ENCODE measurements at regions of chr1 and their contacts with region 1.

Region 1: DNA sequence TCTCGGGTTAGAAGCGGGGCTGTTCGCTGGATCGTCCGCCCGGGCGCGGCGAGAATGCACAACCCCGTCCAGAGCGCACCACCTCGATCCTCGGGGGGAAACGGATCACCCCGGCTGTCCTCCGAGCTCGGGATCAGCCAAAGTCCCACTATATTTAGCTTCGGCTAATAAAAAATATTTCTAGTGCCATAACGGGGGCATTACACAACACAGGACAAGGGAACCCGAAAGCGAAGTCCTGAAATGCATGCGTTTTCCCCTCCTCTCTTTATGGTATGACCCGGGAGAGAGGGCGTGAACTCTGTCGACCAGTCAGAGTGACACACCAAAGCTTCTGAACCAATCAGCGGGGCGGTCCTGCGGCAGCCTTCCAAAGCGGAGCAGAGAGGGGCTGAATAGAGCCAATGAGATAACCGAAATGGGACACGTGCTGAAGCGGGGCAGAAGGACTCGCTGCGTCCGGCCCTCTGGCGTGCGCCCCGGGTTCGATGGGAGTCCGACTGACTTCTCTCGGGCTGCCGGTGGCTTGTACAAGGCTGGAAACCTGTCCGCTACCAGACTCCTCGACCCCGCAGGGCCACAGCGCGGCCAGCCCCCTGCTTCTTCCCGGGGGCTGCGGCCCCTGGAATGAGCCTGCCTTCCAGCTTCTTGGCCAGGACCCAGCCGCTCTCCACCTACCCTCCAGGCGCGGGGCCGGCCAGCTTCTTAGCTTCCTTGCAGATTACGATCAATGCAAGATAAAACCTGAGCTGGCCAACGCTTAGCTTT is at the start of gene ALDH4A1:
- DNase-seq: peak; percentile 99
- H3K4me3 Mint-ChIP-seq: peak within 1 kb of the TSS; percentile 88
- H3K27ac Mint-ChIP-seq: peak within 1 kb of the TSS; percentile 98
- H3K4me1 Mint-ChIP-seq: peaks cover 16% of the 10 kb centered on the region
- H3K27me3 Mint-ChIP-seq: no peaks in the 10 kb centered on the region
- CTCF ChIP-seq: peak; percentile 7
- total RNA-seq, gene ALDH4A1: 5.7 and 6.3 TPM in 2 replicates

Region 2: DNA sequence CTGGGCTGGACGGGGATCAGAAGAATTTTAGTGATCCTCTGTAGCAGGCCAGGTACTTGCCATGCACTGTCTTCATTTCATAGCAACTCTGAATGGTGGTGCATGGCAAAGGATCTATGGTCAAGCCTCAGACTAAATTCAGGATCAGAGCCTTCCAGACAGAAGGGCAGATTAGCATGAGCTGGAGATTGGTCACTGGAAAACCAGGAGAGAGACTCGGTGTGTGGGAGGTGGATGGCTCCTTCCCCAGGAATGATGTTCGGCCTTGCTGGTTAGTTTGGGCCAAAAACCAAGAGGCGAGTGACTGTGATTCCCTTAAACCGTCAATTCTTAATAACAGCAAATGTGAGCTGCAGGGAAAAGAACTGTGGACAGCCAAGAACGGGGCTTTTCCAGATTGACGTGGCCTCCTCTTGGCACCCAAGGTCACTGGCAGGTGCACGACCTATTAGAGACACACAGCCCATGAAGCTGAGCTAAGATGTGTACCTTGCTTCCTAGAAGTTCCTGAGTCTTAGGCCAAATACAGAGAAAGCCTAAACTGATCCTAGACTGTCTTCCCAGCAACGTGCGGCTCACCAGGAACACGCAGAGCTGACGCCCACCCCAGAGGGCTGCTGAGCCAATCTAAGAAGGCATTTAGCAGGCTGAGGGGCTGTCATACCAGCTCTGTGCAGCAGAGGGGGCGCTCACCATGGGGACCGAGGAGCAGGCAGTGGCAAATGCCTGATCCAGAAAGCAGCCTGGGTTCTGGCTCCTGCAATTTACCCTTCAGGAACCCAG is 18.9 kb before region 1 on chr1:
- CTCF ChIA-PET with region 1: interaction called, 16 read pairs
- POLR2A ChIA-PET with region 1: interaction called, 17 read pairs
- intact Hi-C with region 1: no loop called
- DNase-seq: peak; percentile 65
- H3K4me3 Mint-ChIP-seq: no peak overlapping the region
- H3K27ac Mint-ChIP-seq: no peak overlapping the region
- H3K4me1 Mint-ChIP-seq: peaks cover 5% of the 10 kb centered on the region
- H3K27me3 Mint-ChIP-seq: no peaks in the 10 kb centered on the region
- CTCF ChIP-seq: peak; percentile 86

Region 3: DNA sequence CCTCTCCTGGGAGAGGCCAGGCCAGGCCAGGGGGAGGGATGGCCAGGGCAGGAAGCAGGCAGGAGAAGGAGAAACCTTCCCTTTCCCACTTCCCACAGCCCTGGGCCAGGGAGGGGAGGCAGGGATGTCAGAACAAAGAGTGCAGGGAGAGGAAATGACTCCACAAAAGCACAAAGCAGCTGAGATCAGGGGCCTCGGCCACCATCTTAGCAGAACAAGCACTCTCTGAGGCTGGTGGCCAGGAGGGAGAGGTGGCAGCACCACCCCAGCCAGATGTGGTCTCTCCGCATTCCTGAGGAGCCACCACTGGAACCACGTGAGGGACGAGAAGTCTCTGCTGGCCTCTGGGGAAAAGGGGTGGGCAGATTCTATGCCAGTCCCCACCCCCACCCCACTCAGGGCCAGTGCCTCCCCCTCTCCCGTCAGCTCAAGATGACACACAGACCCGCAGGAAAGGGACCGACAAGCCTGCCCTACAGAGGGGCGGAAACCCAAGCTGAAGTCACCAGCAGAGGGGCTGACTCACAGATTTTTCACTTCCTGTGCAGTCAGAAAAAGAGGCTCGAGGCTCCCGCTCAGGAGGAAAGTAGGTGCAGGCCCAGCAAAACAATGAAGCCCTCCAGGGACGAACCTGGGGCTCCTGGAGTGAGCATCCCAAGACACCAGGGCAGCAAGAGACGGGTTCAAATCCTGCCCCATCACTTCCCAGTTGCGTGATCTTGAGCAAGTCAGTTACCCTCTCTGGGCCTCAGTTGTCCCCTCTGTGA is 23.8 kb after region 1 on chr1:
- CTCF ChIA-PET with region 1: interaction called, 11 read pairs
- POLR2A ChIA-PET with region 1: interaction called, 6 read pairs
- intact Hi-C with region 1: no loop called
- DNase-seq: peak; percentile 87
- H3K4me3 Mint-ChIP-seq: peak overlapping the region; percentile 44
- H3K27ac Mint-ChIP-seq: peak overlapping the region; percentile 75
- H3K4me1 Mint-ChIP-seq: peaks cover 27% of the 10 kb centered on the region
- H3K27me3 Mint-ChIP-seq: no peaks in the 10 kb centered on the region
- CTCF ChIP-seq: no peak

Region 4: GRCh38 chr1:18965206-18966173 is 62.8 kb after region 1 on chr1:
- CTCF ChIA-PET with region 1: interaction called, 5 read pairs
- POLR2A ChIA-PET with region 1: interaction called, 11 read pairs
- intact Hi-C with region 1: no loop called
- DNase-seq: peak; percentile 73
- H3K4me3 Mint-ChIP-seq: no peak overlapping the region
- H3K27ac Mint-ChIP-seq: no peak overlapping the region
- H3K4me1 Mint-ChIP-seq: peaks cover 32% of the 10 kb centered on the region
- H3K27me3 Mint-ChIP-seq: peaks cover 4% of the 10 kb centered on the region
- CTCF ChIP-seq: no peak

Region 5: GRCh38 chr1:19074902-19075721 is 172.4 kb after region 1 on chr1:
- CTCF ChIA-PET with region 1: interaction called, 24 read pairs
- POLR2A ChIA-PET with region 1: interaction called, 26 read pairs
- intact Hi-C with region 1: no loop called
- DNase-seq: peak; percentile 91
- H3K4me3 Mint-ChIP-seq: peak overlapping the region; percentile 11
- H3K27ac Mint-ChIP-seq: peak overlapping the region; percentile 90
- H3K4me1 Mint-ChIP-seq: peaks cover 21% of the 10 kb centered on the region
- H3K27me3 Mint-ChIP-seq: no peaks in the 10 kb centered on the region
- CTCF ChIP-seq: no peak

Region 6: GRCh38 chr1:19101244-19101643 is 198.5 kb after region 1 on chr1:
- CTCF ChIA-PET with region 1: interaction called, 52 read pairs
- POLR2A ChIA-PET with region 1: interaction called, 8 read pairs
- intact Hi-C with region 1: loop called (anchors 1 kb)
- DNase-seq: no peak
- H3K4me3 Mint-ChIP-seq: no peak overlapping the region
- H3K27ac Mint-ChIP-seq: no peak overlapping the region
- H3K4me1 Mint-ChIP-seq: no peaks in the 10 kb centered on the region
- H3K27me3 Mint-ChIP-seq: no peaks in the 10 kb centered on the region
- CTCF ChIP-seq: no peak

Region 7: DNA sequence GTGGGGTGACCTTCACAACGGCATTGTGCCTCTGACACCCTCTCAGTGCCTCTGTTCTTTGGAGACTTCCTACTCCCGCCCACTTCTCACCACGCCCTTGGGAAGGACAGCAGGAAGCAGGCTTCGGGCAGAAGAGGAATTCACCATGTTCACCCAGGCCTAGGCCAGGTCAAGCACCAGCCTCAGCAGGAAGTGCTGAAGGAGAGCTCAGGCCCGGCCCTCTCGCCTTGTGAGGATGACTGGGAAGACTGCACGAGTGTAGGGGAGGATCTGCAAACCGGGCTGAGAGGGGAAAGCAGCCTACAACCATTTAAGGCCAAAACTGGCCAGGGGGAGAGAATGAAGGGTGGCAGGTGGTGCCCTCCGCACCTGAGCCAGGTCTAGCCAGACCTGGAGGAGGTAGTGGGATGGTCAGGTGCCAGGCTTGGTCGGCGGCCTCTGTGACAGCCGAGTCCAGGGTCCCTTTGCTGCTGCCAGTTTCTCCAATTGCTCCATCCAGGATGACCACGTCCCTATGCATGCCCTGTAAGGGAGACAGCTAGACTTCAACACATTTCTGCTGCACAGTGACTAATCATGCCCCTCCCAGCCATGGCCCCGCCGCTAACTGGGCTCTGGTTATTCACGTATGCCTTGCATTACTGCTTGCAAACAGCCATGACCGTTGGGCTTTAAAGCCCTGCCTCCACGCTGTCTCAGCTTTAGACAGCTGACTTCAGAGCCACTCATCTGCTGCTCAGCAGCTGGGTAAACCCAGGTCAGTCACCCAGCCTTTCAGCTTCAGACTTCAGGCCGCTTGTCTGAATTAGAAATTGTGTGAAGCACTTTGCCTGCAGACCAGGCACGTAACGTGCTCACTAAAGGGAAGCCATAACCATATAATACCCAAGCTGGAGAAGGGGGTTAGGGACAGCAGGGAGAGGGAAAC is 357.8 kb after region 1 on chr1:
- CTCF ChIA-PET with region 1: no interaction called
- POLR2A ChIA-PET with region 1: no interaction called
- intact Hi-C with region 1: no loop called
- DNase-seq: peak; percentile 23
- H3K4me3 Mint-ChIP-seq: no peak overlapping the region
- H3K27ac Mint-ChIP-seq: no peak overlapping the region
- H3K4me1 Mint-ChIP-seq: no peaks in the 10 kb centered on the region
- H3K27me3 Mint-ChIP-seq: no peaks in the 10 kb centered on the region
- CTCF ChIP-seq: no peak

Measured in MCF 10A (cell line).